Activated T-helper 1 cell treated with anti-CD3 and anti-CD28 coated beads, Interleukin-12 subunit alpha, Interleukin-12 subunit beta, Interleukin-2, Interleukin-4 antibody, amounts not matched to agents 30 ng/mL and 10 ng/mL and 1 ng/mL, durations not matched to agents 14 hours and 24 hours and 36 hours (primary cell): ENCODE measurements at regions of chr11 and their contacts with region 1.

Region 1: DNA sequence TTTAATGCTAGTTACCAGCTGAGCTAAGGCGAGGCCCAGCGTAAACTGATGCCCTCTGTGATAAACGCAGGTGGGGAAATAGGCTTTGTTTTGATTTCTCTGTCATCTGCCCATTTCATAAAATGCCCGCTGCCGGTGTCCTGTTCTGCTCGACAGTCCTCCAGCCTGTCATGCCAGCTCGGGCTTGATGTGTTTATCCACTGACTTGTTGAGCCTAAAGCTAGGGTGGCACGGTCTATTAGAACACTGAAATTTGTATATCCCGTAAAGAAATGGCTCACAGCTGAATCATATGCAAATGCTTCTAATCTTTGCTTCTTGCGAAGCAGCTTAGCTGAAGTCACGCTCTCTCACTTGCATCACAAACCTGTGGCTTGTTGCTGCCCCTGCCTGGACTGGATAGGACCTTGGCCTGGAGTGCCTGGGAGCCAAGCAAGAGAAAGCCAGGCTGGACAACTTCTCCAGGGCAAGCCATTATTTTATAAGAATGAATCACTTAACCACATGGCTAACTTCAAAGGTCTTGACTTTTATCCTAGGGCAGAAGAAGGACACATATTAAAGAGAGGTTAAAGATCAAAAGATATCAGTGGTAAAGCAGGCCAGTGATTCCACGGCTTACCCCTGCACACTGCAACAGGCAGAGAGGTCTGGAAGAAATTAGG is 33.1 kb downstream of the EHF start:
- DNase-seq: no peak
- H3K4me3 Mint-ChIP-seq: no peak overlapping the region
- H3K27ac Mint-ChIP-seq: no peak overlapping the region
- H3K4me1 Mint-ChIP-seq: peaks cover 21% of the 10 kb centered on the region
- H3K27me3 Mint-ChIP-seq: peaks cover 66% of the 10 kb centered on the region

Region 2: DNA sequence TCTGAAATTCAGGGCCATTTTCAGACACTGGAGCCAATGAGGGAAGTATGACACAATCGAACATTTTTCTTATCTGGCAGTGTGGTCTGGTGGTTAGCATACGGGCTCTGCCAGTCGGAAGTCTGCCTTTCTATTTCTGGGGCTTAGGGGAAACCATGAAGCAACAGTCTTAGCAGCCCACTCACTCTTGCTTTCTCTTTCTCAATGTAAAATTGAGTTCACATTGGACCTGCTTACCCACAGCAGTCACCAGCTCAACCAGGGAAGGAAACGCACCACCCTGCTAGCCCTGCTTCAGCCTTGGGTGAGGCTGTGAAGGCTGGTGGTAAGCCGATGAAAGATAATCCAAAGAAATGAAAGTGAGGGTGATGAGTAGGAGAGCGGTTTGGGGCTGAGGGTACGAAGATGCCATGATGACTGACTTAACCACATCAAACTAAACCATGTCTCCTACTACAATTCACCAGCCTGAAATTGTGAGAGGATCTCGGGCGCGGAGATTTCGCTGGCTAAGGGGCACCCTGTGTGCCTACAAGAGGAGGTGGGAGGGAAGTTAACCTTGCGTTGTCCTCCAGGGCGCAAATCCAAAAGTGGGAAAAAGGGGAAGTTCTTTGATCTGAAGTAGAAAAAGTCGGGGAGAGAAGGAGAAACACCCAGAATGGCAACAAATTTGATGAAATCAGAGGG is 760.1 kb before region 1 on chr11:
- intact Hi-C with region 1: loop called (anchors 1 kb)
- DNase-seq: peak; percentile 38
- H3K4me3 Mint-ChIP-seq: no peak overlapping the region
- H3K27ac Mint-ChIP-seq: peak overlapping the region; percentile 16
- H3K4me1 Mint-ChIP-seq: peaks cover 22% of the 10 kb centered on the region
- H3K27me3 Mint-ChIP-seq: peaks cover 64% of the 10 kb centered on the region

Region 3: GRCh38 chr11:34250732-34251639 is 403.0 kb before region 1 on chr11:
- intact Hi-C with region 1: loop called (anchors 2 kb)
- DNase-seq: peak; percentile 38
- H3K4me3 Mint-ChIP-seq: peak overlapping the region; percentile 52
- H3K27ac Mint-ChIP-seq: peak overlapping the region; percentile 6
- H3K4me1 Mint-ChIP-seq: peaks cover 63% of the 10 kb centered on the region
- H3K27me3 Mint-ChIP-seq: peaks cover 13% of the 10 kb centered on the region

Region 4: GRCh38 chr11:34633990-34634693 is 19.8 kb before region 1 on chr11:
- intact Hi-C with region 1: loop called (anchors 1 kb)
- DNase-seq: no peak
- H3K4me3 Mint-ChIP-seq: no peak overlapping the region
- H3K27ac Mint-ChIP-seq: no peak overlapping the region
- H3K4me1 Mint-ChIP-seq: peaks cover 17% of the 10 kb centered on the region
- H3K27me3 Mint-ChIP-seq: peaks cover 32% of the 10 kb centered on the region

Region 5: GRCh38 chr11:34685864-34686263 is 31.9 kb after region 1 on chr11:
- intact Hi-C with region 1: loop called (anchors 1 kb)
- DNase-seq: no peak
- H3K4me3 Mint-ChIP-seq: no peak overlapping the region
- H3K27ac Mint-ChIP-seq: no peak overlapping the region
- H3K4me1 Mint-ChIP-seq: no peaks in the 10 kb centered on the region
- H3K27me3 Mint-ChIP-seq: peaks cover 5% of the 10 kb centered on the region

Region 6: DNA sequence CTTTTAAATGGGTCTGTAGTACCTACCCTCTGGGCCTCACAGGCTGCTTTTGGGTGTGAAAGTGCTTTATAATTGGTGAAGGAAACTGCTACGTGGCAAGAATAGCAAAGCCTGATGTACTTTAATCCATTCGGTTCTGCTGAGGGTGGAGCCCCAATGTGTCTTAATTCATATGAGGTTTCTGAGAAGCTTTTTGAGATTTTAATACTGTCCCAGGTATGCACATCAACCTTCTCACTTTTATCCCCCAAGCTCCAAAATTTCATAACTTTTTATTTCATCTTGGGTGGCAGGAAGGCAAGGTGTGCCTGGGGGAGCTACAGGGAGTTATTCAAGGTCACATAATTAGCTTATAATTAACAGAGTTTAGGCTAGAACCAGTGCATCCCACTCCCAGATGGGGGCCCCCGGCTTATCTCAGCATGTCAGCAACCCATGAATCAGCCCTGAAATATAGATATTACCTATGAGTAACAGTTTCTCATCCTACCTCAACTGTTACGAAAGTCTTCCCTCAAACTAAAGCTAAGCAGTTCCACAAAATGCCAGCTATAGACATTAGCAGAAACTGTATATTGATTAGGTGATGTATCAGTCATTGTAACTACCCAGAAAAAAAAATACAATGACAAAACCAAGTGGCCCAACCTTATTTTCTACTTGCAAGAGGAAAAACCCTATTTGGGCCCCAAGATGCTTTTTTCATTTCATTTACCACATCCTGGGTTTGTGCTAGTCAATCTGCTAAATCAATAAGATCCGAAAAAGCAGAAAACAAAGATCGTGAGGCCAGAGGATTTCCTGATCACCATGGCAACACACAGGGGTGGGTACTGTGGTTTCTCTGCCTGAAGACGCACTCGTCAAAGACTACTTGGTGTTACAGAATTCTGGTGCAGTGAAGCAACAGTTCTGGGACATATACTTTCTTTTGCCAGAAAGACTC is 511.7 kb after region 1 on chr11:
- intact Hi-C with region 1: loop called (anchors 1 kb)
- DNase-seq: peak; percentile 92
- H3K4me3 Mint-ChIP-seq: peak overlapping the region; percentile 63
- H3K27ac Mint-ChIP-seq: peak overlapping the region; percentile 97
- H3K4me1 Mint-ChIP-seq: peaks cover 100% of the 10 kb centered on the region
- H3K27me3 Mint-ChIP-seq: no peaks in the 10 kb centered on the region

Region 7: GRCh38 chr11:35343033-35343598 is 689.2 kb after region 1 on chr11:
- intact Hi-C with region 1: loop called (anchors 2 kb)
- DNase-seq: peak; percentile 65
- H3K4me3 Mint-ChIP-seq: peak overlapping the region; percentile 27
- H3K27ac Mint-ChIP-seq: peak overlapping the region; percentile 79
- H3K4me1 Mint-ChIP-seq: peaks cover 46% of the 10 kb centered on the region
- H3K27me3 Mint-ChIP-seq: peaks cover 9% of the 10 kb centered on the region